ENCODE measurements at regions of chr2 and their contacts with region 1.

Region 1: DNA sequence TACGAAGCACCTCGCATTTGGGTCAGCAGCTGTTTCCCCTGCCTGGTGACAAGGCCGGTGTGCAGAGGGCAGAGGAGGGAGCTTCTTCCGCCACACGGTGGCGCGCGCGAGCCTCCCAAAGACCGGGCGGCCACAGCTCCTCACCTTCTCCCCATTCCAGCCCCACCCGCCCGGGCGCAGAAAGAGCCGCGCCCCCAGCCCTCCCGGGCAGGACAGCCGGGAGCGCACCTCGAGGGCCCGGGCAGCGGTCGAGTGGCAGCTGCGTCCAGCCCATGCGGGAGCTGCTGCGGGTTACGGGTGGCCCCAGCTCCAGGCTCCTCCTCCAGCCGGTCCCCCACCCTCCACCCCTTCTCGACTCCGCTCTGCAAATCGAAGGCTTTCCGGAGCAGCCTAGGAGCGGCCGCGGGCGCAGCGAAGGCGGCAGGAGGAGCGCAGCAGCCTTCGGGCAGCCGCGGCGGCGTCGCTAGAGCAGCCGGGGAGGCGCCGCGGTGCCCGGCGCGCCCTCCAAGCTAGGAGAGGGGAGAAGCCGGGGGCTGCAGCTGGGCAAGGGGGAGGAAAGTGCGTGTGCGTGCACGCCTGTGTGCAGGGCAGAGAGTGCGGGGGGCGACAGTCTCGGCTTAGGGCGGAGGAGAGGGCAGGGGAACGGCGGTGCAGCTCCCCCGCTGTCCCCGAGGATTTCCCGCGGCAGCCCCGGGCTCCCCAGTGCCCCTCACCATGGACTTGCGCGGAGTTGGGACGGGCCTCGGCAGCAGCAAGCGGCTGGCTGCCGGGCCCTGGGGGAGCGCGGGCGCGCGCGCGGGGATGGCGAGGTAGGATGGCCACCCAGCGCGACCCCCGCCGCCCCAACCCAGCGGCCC is at the start of gene CCDC85A:
- DNase-seq: peak in 13 of 14 experiments; percentile 5 to 58 (median 37)
- ATAC-seq: peak; percentile 51
- H3K4me3 ChIP-seq: peak within 1 kb of the TSS; percentile 10
- H3K4me3 Mint-ChIP-seq: peak within 1 kb of the TSS; percentile 66
- H3K27ac ChIP-seq: no peak within 1 kb of the TSS
- H3K27ac Mint-ChIP-seq: no peak within 1 kb of the TSS
- H3K4me1 ChIP-seq: peaks cover 8% of the 10 kb centered on the region
- H3K4me1 Mint-ChIP-seq: peaks cover 4% of the 10 kb centered on the region
- H3K27me3 ChIP-seq: peaks cover 39 to 58% of the 10 kb centered on the region in 2 experiments
- H3K27me3 Mint-ChIP-seq: peaks cover 81% of the 10 kb centered on the region
- CTCF ChIP-seq: peak; percentile 55
- total RNA-seq, gene CCDC85A: not detected

Region 2: GRCh38 chr2:54701029-54701428 is 1482.8 kb before region 1 on chr2:
- CTCF ChIA-PET with region 1: no interaction called
- POLR2A ChIA-PET with region 1: no interaction called
- intact Hi-C with region 1: no loop called
- DNase-seq: no peak
- ATAC-seq: no peak
- H3K4me3 ChIP-seq: no peak overlapping the region
- H3K4me3 Mint-ChIP-seq: no peak overlapping the region
- H3K27ac ChIP-seq: no peak overlapping the region
- H3K27ac Mint-ChIP-seq: no peak overlapping the region
- H3K4me1 ChIP-seq: no peaks in the 10 kb centered on the region
- H3K4me1 Mint-ChIP-seq: no peaks in the 10 kb centered on the region
- H3K27me3 ChIP-seq: no peaks in the 10 kb centered on the region
- H3K27me3 Mint-ChIP-seq: peaks cover 4% of the 10 kb centered on the region
- CTCF ChIP-seq: no peak

Region 3: DNA sequence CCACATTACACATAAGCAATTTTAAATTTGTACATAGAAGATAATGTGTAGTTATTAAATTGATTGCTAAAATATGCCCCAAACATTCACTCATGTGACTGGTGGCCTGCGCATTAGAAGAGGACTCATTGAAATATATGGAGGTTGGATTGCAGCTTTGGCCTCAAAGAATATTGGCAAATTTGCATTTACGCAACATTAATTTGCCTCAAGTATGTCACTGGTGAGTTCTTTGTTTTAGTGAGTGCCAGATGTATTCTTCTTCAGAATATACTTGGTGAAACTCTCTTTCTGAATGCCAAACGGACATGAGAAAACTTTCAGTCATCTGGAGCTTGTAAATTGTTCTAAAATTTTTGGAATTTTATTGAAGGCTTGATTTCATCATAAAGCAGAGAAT is 254.4 kb before region 1 on chr2:
- CTCF ChIA-PET with region 1: no interaction called
- POLR2A ChIA-PET with region 1: no interaction called
- intact Hi-C with region 1: no loop called
- DNase-seq: no peak
- ATAC-seq: no peak
- H3K4me3 ChIP-seq: no peak overlapping the region
- H3K4me3 Mint-ChIP-seq: no peak overlapping the region
- H3K27ac ChIP-seq: no peak overlapping the region
- H3K27ac Mint-ChIP-seq: no peak overlapping the region
- H3K4me1 ChIP-seq: no peaks in the 10 kb centered on the region
- H3K4me1 Mint-ChIP-seq: no peaks in the 10 kb centered on the region
- H3K27me3 ChIP-seq: peaks cover 0 to 7% of the 10 kb centered on the region in 2 experiments
- H3K27me3 Mint-ChIP-seq: peaks cover 26% of the 10 kb centered on the region
- CTCF ChIP-seq: no peak

Region 4: GRCh38 chr2:56209701-56210100 is 25.8 kb after region 1 on chr2:
- CTCF ChIA-PET with region 1: no interaction called
- POLR2A ChIA-PET with region 1: no interaction called
- intact Hi-C with region 1: no loop called
- DNase-seq: no peak
- ATAC-seq: no peak
- H3K4me3 ChIP-seq: no peak overlapping the region
- H3K4me3 Mint-ChIP-seq: no peak overlapping the region
- H3K27ac ChIP-seq: no peak overlapping the region
- H3K27ac Mint-ChIP-seq: no peak overlapping the region
- H3K4me1 ChIP-seq: no peaks in the 10 kb centered on the region
- H3K4me1 Mint-ChIP-seq: no peaks in the 10 kb centered on the region
- H3K27me3 ChIP-seq: no peaks in the 10 kb centered on the region
- H3K27me3 Mint-ChIP-seq: no peaks in the 10 kb centered on the region
- CTCF ChIP-seq: no peak

Region 5: GRCh38 chr2:57516698-57517340 is 1332.9 kb after region 1 on chr2:
- CTCF ChIA-PET with region 1: no interaction called
- POLR2A ChIA-PET with region 1: no interaction called
- intact Hi-C with region 1: loop called in 1 of 2 experiments (anchors 5 kb)
- DNase-seq: peak in 3 of 14 experiments; percentile 20 to 35 (median 25)
- ATAC-seq: peak; percentile 32
- H3K4me3 ChIP-seq: no peak overlapping the region
- H3K4me3 Mint-ChIP-seq: no peak overlapping the region
- H3K27ac ChIP-seq: no peak overlapping the region
- H3K27ac Mint-ChIP-seq: no peak overlapping the region
- H3K4me1 ChIP-seq: no peaks in the 10 kb centered on the region
- H3K4me1 Mint-ChIP-seq: no peaks in the 10 kb centered on the region
- H3K27me3 ChIP-seq: no peaks in the 10 kb centered on the region
- H3K27me3 Mint-ChIP-seq: no peaks in the 10 kb centered on the region
- CTCF ChIP-seq: peak; percentile 70

Measured in CD4-positive, alpha-beta T cell (primary cell).